AG04450 (cell line): ENCODE measurements at regions of chr2 and their contacts with region 1.

Region 1: GRCh38 chr2:232327105-232328041 is 51.2 kb upstream of the ALPP start:
- DNase-seq: peak; percentile 26
- H3K4me3 ChIP-seq: no peak overlapping the region
- H3K27ac ChIP-seq: no peak overlapping the region
- H3K27me3 ChIP-seq: no peaks in the 10 kb centered on the region
- CTCF ChIP-seq: peak; percentile 86

Region 2: DNA sequence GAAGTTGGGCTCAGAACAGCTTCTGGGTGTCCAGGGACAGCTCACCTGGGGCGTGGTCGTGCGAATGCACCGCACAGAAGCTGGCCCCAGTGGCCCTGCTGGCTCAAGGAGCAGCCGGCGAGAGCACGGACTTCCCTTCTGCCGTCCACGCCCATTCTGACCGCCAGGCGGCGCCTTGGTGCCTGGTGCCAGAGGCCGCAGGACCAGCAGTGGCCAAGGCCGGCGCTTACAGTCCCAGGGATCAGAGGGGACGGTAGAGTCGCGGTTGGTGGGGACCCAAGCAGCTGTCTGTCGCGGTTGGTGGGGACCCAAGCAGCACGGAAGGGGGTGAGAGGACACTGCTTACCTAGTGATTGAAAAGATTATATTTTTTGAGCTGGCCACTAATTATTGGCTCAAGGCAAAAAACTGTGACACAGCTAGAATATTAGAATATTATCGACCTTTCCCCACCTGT is 426.9 kb before region 1 on chr2:
- CTCF ChIA-PET with region 1: interaction called, 34 read pairs
- POLR2A ChIA-PET with region 1: no interaction called
- DNase-seq: peak; percentile 11
- H3K4me3 ChIP-seq: no peak overlapping the region
- H3K27ac ChIP-seq: no peak overlapping the region
- H3K27me3 ChIP-seq: peaks cover 20% of the 10 kb centered on the region
- CTCF ChIP-seq: peak; percentile 92

Region 3: GRCh38 chr2:231925303-231926179 is 401.8 kb before region 1 on chr2:
- CTCF ChIA-PET with region 1: interaction called, 67 read pairs
- POLR2A ChIA-PET with region 1: interaction called, 3 read pairs
- DNase-seq: peak; percentile 61
- H3K4me3 ChIP-seq: peak overlapping the region; percentile 50
- H3K27ac ChIP-seq: no peak overlapping the region
- H3K27me3 ChIP-seq: peaks cover 72% of the 10 kb centered on the region
- CTCF ChIP-seq: peak; percentile 68

Region 4: DNA sequence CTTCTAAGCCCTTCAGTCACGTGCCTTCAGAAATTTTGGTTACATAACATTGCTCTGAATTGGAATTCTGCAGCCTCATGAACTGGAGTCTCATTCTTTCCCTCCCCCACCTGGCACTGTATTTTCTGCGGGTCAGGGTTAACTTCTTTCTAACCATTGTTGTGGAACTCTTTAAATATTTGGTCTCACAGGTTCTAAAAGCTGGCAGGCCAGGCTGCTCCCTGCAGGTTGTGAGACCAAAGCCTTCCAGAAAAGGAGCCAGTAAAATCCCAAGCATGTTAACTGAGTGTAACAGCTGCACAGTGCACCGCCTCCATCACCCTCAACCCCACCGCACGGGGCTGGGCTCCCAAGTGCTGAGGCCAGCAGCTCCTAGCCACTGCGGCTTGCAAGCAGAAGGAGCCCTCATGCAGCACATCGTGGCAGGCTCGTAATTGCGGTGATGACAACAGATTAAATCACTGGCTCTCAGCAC is 122.9 kb before region 1 on chr2:
- CTCF ChIA-PET with region 1: no interaction called
- POLR2A ChIA-PET with region 1: no interaction called
- DNase-seq: no peak
- H3K4me3 ChIP-seq: no peak overlapping the region
- H3K27ac ChIP-seq: no peak overlapping the region
- H3K27me3 ChIP-seq: no peaks in the 10 kb centered on the region
- CTCF ChIP-seq: no peak

Region 5: DNA sequence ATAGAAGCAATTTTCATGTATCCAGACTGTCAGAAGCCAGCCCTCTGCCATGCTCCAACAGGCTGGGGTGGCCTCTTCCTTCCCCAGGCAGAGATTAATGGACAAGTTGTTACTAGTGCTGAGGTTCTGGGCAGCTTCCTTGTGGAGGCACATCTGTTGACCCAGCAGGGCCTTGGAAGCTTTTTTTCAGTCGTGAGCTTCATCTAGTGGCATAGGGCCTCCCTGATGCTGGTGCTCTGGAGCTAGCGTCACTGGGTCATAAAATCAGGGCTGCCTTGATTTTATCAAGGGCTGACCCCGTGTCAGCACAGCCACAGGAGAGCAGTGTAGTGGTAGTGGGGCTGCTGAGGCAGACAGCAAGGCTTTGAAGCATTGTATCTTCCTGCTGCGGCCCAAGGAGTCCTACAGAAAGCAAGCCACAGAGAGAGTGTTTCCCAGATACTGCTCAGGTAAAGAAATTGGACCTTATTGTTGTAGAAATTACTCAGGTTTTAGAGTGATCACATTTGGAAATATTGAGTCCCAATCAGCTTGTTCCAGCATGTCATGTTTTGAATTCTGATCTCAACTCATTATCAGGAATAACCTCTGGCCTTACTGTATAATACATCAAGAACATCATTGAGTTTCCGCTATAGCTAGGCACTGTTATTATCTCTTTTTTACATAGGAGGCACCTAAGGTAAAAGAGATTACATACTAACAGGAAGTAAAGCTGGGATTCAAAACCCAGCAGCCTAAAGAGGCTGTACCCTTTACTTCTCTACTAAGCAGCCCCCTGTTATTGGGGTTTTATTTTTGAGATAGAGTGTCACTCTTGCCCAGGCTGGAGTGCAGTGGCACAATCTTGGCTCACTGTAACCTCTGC is 41.1 kb before region 1 on chr2:
- CTCF ChIA-PET with region 1: interaction called, 13 read pairs
- POLR2A ChIA-PET with region 1: no interaction called
- DNase-seq: no peak
- H3K4me3 ChIP-seq: no peak overlapping the region
- H3K27ac ChIP-seq: no peak overlapping the region
- H3K27me3 ChIP-seq: no peaks in the 10 kb centered on the region
- CTCF ChIP-seq: no peak

Region 6: DNA sequence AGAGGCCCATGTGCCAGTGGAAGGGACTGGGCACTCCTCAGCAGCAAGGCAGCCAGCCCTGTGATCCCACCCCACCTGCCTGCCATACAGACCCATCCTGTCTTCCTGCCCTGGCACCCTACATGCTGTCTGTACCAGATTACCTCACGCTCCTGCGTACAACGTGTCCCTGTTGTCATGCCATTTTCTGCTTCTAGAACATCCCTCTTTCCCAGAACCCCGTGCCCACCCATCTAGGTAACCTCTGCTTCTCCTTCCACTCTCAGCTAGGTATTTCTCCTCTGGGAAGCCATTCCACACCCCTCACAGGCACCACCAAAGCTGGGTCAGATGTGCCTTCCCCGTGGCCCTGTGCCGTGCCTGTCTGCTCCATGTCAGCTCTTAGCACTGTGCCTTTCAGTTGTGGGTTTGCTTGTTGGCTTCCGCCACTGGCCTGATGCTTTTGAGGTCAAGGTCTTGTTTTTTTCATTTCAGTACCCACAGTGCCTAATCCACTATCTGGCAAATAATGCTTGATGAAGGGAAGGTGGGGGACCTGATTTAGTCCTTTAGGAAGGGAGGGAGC is 20.6 kb before region 1 on chr2:
- CTCF ChIA-PET with region 1: interaction called, 13 read pairs
- POLR2A ChIA-PET with region 1: no interaction called
- DNase-seq: no peak
- H3K4me3 ChIP-seq: no peak overlapping the region
- H3K27ac ChIP-seq: no peak overlapping the region
- H3K27me3 ChIP-seq: no peaks in the 10 kb centered on the region
- CTCF ChIP-seq: no peak

Region 7: GRCh38 chr2:232315049-232315922 is 12.1 kb before region 1 on chr2:
- CTCF ChIA-PET with region 1: interaction called, 11 read pairs
- POLR2A ChIA-PET with region 1: no interaction called
- DNase-seq: peak; percentile 2
- H3K4me3 ChIP-seq: no peak overlapping the region
- H3K27ac ChIP-seq: no peak overlapping the region
- H3K27me3 ChIP-seq: no peaks in the 10 kb centered on the region
- CTCF ChIP-seq: no peak

Region 8: GRCh38 chr2:232339121-232340081 is 12.0 kb after region 1 on chr2:
- CTCF ChIA-PET with region 1: interaction called, 11 read pairs
- POLR2A ChIA-PET with region 1: no interaction called
- DNase-seq: no peak
- H3K4me3 ChIP-seq: no peak overlapping the region
- H3K27ac ChIP-seq: no peak overlapping the region
- H3K27me3 ChIP-seq: no peaks in the 10 kb centered on the region
- CTCF ChIP-seq: no peak